ENCODE measurements at regions of chr16 and their contacts with region 1.

Region 1: DNA sequence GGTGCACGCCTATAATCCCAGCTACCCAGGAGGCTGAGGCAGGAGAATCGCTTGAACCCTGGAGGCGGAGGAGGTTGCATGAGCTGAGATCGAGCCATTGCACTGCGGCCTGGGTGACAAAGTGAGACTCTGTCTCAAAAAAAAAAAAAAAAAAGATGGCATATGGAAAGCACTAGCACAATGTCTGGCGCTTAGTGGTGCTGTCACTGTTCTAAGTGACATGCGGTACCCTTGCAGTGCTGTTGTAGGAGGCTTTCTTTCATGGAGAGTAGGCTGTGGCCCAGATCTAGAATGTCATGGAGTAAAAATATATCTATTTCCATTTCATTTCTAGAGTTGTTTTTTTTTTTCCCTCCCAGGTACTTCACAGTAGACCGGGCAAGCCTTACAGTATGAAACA is 14.6 kb upstream of the METTL9 start:
- DNase-seq: no peak
- H3K4me3 ChIP-seq: no peak overlapping the region
- H3K27ac ChIP-seq: no peak overlapping the region
- H3K4me1 ChIP-seq: peaks cover 7% of the 10 kb centered on the region
- H3K27me3 ChIP-seq: no peaks in the 10 kb centered on the region
- CTCF ChIP-seq: no peak

Region 2: DNA sequence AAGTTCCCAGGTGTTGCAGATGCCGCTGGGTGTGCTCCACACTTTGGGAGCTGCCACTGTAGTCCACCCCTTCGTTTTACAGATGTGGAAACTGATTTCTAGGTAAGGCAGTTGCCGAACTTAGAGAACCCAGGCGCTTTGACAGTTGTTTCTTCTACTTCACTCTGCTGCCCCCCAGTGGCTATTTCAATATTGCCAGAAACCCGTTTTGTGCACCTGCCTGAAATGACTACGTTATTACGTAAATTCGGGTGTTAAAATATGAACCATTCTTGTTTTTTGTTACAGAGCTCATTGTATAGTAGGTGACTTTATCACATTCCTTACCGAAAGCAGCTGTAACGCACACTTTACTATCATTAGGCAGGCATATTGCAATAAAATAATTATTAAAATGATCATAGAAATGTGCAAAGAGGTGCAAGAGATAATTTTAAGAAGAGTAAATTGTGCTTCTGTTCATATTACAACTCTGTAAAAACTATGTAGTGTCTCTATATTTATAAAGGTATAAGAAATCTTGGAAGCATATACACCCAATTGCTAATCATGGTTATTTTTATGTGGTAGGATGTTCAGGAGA is 123.8 kb after region 1 on chr16:
- intact Hi-C with region 1: loop called (anchors 5 kb)
- DNase-seq: peak; percentile 35
- H3K4me3 ChIP-seq: no peak overlapping the region
- H3K27ac ChIP-seq: no peak overlapping the region
- H3K4me1 ChIP-seq: peaks cover 3% of the 10 kb centered on the region
- H3K27me3 ChIP-seq: peaks cover 10% of the 10 kb centered on the region
- CTCF ChIP-seq: peak; percentile 87